ENCODE measurements at regions of chr12 and their contacts with region 1.

Region 1: DNA sequence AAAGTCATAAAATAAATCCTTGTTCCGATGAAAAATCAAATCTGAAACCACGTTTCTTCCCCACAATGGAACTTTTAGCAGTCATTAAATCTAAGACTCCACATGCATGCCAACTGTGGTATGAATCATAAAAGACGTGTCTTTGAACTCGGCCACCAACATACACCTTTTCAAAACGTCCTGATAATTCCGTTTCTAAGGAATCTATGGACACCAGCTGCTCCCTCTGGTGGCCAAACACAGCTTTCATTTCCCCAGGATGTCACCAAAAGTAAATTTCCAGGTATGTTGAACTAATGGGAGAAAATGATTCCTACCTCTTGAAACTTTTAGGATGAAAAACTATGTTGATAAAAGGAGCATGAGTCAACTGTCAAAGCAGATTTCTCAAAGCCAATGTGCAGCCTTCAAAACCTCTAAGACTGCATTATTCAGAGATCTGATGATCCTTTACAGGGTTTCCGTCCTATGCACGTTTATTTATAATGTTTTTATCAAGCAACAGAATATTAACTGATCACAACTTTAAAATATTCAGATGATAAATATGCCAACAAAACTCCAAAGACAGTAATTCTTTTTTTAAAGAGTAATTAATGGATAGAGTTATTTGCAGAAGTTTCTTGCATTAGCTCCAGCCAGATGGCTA is 96.2 kb downstream of the CIT start:
- DNase-seq: peak in 1 of 3 donors; percentile 59
- ATAC-seq: no peak
- H3K4me3 ChIP-seq: no peak overlapping the region
- H3K27ac ChIP-seq: no peak overlapping the region
- H3K4me1 ChIP-seq: no peaks in the 10 kb centered on the region
- H3K27me3 ChIP-seq: no peaks in the 10 kb centered on the region

Region 2: GRCh38 chr12:119667577-119668323 is 113.2 kb before region 1 on chr12 and contains the start of gene PRKAB1:
- intact Hi-C with region 1: loop called in 1 of 4 experiments (anchors 5 kb)
- DNase-seq: peak; percentile 97 to 98 (median 98)
- ATAC-seq: peak; percentile 99
- H3K4me3 ChIP-seq: peak within 1 kb of the TSS; percentile 78
- H3K27ac ChIP-seq: peak within 1 kb of the TSS; percentile 71
- H3K4me1 ChIP-seq: peaks cover 5% of the 10 kb centered on the region
- H3K27me3 ChIP-seq: no peaks in the 10 kb centered on the region
- total RNA-seq, gene PRKAB1: 9.8 to 16.3 (median 14.1) TPM

Region 3: GRCh38 chr12:119843100-119843499 is 62.2 kb after region 1 on chr12:
- intact Hi-C with region 1: no loop called
- DNase-seq: no peak
- ATAC-seq: no peak
- H3K4me3 ChIP-seq: no peak overlapping the region
- H3K27ac ChIP-seq: no peak overlapping the region
- H3K4me1 ChIP-seq: no peaks in the 10 kb centered on the region
- H3K27me3 ChIP-seq: no peaks in the 10 kb centered on the region